Lower leg skin (tissue), 4 donors: ENCODE measurements at regions of chr15 and their contacts with region 1.

Region 1: DNA sequence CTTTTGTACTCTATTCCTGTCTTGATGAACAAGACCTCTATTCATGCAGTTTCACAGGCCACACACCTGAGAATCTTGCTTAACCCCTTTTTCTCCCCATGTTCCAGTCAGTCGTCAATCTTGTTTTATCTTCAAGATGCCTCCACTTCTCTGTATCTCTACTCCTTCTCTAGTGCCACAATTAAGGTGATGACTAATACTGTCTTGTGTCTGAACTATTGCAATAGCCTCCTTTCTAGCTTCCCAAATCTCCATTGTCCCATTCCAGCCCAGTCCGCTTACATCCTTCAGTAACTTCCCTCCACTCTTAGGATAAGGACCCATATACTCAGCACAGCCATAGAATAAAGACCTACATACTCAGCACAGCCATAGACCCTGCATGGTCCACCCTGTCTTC is 24.7 kb downstream of the CHST14 start:
- DNase-seq: no peak
- H3K4me3 ChIP-seq: no peak overlapping the region
- CTCF ChIP-seq: no peak
- POLR2A ChIP-seq: no peak

Region 2: GRCh38 chr15:40549894-40550293 is 54.4 kb after region 1 on chr15:
- intact Hi-C with region 1: loop called (anchors 2 kb)
- DNase-seq: no peak
- H3K4me3 ChIP-seq: no peak overlapping the region
- CTCF ChIP-seq: no peak
- POLR2A ChIP-seq: no peak

Region 3: DNA sequence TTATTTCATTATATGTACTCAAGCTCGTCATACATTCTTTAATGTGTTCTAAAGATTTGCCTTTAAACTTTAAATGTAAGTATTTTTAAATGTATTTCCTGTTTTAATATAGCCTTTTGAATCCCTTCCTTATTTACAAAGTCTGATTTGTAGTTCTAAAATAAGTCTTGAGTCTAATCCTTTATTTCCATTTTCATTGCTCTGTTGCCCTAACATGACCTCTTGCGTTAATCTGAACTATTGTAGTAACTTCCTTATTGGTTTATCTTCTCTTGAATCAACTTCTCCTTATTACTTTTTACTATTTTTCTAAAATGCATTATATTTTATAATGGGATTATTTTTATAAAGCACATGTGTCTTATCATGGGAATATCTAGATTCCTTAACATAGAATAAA is 122.5 kb after region 1 on chr15:
- intact Hi-C with region 1: no loop called
- DNase-seq: no peak
- H3K4me3 ChIP-seq: no peak overlapping the region
- CTCF ChIP-seq: no peak
- POLR2A ChIP-seq: no peak